Activated CD4-positive, alpha-beta memory T cell treated with anti-CD3 and anti-CD28 coated beads, Interleukin-2, amount 10 ng/mL, durations not matched to agents 7 days and 5 days (primary cell): ENCODE measurements at regions of chr3 and their contacts with region 1.

Region 1: DNA sequence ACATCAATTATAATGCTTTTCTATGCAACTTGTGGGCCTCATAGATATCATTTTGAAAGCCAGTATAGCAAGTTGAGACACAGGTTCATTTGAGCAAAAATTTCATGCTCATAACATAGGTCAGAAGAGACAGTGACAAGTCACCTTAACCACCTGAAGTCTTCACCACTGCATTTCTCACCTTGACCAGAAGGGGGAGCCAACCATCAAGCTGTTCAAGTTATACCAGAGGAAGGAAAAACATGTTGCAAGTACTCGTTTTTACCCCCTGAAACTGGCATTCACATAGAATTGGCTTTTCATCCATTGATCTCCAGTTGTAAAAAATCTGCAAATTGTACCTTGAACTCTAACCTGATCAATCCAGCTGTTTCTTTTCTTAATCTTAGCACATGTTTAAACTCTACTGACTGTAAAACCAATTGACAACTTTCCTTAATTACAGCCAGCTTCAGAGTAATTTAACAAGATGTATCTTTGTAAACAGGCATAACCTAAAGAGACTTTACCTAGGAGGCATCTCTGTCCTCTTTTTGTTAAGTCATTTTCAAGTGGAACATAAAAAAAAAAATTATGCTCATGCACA is 1.4 kb downstream of the LMOD3 start:
- DNase-seq: peak; percentile 83
- H3K4me3 Mint-ChIP-seq: no peak overlapping the region
- H3K27ac Mint-ChIP-seq: no peak overlapping the region
- H3K4me1 Mint-ChIP-seq: peaks cover 5% of the 10 kb centered on the region
- H3K27me3 Mint-ChIP-seq: no peaks in the 10 kb centered on the region

Region 2: DNA sequence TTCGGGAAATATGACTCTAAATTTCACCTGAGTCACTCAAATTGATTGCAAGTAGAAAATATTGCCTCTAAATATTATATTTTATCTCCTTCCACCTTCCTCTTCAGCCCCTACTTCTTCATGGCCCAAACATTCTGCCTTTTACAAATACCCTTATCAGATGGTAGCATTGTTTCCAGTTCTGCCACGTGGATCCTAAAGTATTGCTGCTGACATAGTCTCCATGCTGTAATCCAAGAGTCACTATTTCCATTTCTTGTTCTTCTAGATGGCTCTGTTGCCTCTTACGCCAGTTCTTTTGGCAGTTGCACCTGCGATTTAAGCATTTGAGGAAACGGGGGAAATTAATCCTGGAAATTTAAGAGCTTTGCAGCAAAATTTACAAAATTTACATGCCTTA is 12.2 kb before region 1 on chr3:
- CTCF ChIA-PET with region 1: interaction called, 35 read pairs
- POLR2A ChIA-PET with region 1: no interaction called
- DNase-seq: no peak
- H3K4me3 Mint-ChIP-seq: no peak overlapping the region
- H3K27ac Mint-ChIP-seq: no peak overlapping the region
- H3K4me1 Mint-ChIP-seq: peaks cover 13% of the 10 kb centered on the region
- H3K27me3 Mint-ChIP-seq: no peaks in the 10 kb centered on the region

Region 3: GRCh38 chr3:69410250-69410649 is 289.3 kb after region 1 on chr3:
- CTCF ChIA-PET with region 1: interaction called, 11 read pairs
- POLR2A ChIA-PET with region 1: no interaction called
- DNase-seq: peak; percentile 74
- H3K4me3 Mint-ChIP-seq: no peak overlapping the region
- H3K27ac Mint-ChIP-seq: no peak overlapping the region
- H3K4me1 Mint-ChIP-seq: peaks cover 5% of the 10 kb centered on the region
- H3K27me3 Mint-ChIP-seq: peaks cover 12% of the 10 kb centered on the region